Left lung (tissue), 14 donors: ENCODE measurements at regions of chr21 and their contacts with region 1.

Region 1: GRCh38 chr21:38805328-38806152 is at the start of gene ETS2:
- DNase-seq: peak; percentile 92 to 99 (median 96)
- ATAC-seq: peak; percentile 83
- H3K4me3 ChIP-seq: peak within 1 kb of the TSS; percentile 70 to 90
- H3K27ac ChIP-seq: peak within 1 kb of the TSS; percentile 96 to 97
- H3K4me1 ChIP-seq: peaks cover 15 to 48% of the 10 kb centered on the region in 2 donors
- H3K27me3 ChIP-seq: no peaks in the 10 kb centered on the region
- CTCF ChIP-seq: no peak
- polyA plus RNA-seq, gene ETS2: 153 to 199 (median 165) TPM

Region 2: GRCh38 chr21:38505654-38506515 is 299.7 kb before region 1 on chr21:
- intact Hi-C with region 1: loop called in 1 of 2 experiments (anchors 10 kb)
- DNase-seq: peak in 2 of 4 donors; percentile 54 to 80
- ATAC-seq: peak; percentile 95
- H3K4me3 ChIP-seq: peak overlapping the region in 1 of 2 donors; percentile 36
- H3K27ac ChIP-seq: peak overlapping the region in 1 of 2 donors; percentile 65
- H3K4me1 ChIP-seq: peaks cover 0 to 38% of the 10 kb centered on the region in 2 donors
- H3K27me3 ChIP-seq: peaks cover 0 to 12% of the 10 kb centered on the region in 2 donors
- CTCF ChIP-seq: peak; percentile 59 to 60

Region 3: DNA sequence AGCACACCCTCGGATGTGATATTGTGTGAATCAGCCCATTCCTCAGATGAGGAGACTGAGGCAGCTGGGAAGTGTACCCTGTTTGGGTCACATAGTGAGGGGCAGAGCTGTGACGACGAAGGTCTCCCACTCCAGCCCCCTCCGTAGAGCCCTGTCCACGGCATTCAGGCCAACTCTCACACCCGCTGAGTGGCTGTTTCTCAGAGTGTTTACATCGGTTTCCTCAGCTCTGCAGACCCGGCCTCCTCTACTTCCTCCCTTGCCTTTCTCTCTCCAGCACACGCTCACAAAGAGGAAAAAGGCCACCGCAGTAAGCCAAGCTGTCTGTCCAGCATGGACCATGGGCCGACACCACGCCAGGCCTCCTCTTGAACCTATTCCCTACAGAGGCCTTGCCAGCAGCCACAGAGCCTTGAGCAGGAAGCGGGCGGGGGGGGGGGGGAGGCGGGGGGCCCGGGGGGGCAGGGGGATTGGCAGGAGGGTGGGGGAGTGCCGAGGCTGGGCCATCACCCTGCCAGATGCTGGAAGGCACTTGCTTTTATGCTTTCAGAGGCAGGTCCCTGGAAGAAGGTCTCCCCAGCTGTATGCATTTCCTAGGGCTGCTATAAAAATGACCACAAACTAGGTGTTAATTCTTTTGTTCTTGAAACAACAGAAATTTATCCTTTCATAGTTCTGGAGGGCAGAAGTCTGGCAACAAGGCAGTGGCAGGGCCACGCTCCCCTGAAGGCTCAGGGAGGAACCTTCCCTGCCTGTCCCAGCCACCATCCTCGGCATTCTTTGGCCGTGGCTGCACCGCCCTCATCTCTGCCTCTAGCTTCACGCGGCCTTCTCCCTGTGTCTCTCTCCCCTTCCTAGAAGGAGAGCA is 199.3 kb after region 1 on chr21:
- intact Hi-C with region 1: loop called in 1 of 2 experiments (anchors 10 kb)
- DNase-seq: peak in 3 of 4 donors; percentile 77 to 90 (median 87)
- ATAC-seq: peak; percentile 62
- H3K4me3 ChIP-seq: no peak overlapping the region
- H3K27ac ChIP-seq: peak overlapping the region; percentile 81 to 86
- H3K4me1 ChIP-seq: peaks cover 17 to 89% of the 10 kb centered on the region in 2 donors
- H3K27me3 ChIP-seq: no peaks in the 10 kb centered on the region
- CTCF ChIP-seq: no peak